Lower leg skin (tissue), 4 donors: ENCODE measurements at regions of chr6 and their contacts with region 1.

Region 1: GRCh38 chr6:5143634-5144311 is 58.6 kb downstream of the PPP1R3G start:
- DNase-seq: peak; percentile 85 to 96
- H3K4me3 ChIP-seq: no peak overlapping the region
- CTCF ChIP-seq: peak in 1 of 3 donors; percentile 55
- POLR2A ChIP-seq: no peak

Region 2: GRCh38 chr6:5305968-5306626 is 162.3 kb after region 1 on chr6:
- intact Hi-C with region 1: no loop called
- DNase-seq: no peak
- H3K4me3 ChIP-seq: no peak overlapping the region
- CTCF ChIP-seq: no peak
- POLR2A ChIP-seq: no peak

Region 3: GRCh38 chr6:5401845-5402738 is 258.3 kb after region 1 on chr6:
- intact Hi-C with region 1: loop called (anchors 10 kb)
- DNase-seq: no peak
- H3K4me3 ChIP-seq: no peak overlapping the region
- CTCF ChIP-seq: no peak
- POLR2A ChIP-seq: no peak

Region 4: DNA sequence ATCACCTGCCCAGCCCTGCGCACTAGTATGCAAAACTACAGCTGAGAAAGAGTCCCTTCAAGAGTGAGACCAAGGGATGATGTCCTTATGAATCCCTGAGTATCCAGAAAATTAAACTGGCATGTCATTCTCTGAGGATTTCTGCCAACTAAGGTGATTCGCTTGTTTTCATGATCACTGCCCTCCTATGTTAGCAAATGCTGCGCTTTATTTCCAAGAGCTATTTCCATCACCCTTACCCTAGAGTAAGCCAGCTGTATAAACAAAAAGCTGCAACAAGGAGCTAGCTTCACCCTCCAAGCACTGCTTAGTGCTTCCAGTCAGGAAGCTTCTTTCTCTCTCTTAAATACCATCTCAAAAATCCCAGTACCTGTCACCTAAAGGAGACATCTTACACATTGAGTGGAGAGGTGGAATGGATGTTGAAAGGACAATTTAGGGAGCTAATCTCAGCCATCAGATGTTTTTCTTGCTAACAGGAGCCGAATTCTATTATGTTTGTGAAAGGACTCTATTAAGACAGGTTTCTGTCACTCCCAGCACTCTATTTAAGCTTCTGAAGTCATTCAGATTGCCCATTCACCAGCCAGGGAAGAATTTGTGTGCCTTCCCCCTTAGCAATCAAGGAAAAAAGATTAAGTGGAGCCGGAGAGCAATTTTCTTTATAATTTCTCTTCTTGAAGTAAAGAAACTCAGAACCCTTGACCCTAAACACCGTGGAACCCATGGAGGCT is 540.7 kb after region 1 on chr6:
- intact Hi-C with region 1: no loop called
- DNase-seq: no peak
- H3K4me3 ChIP-seq: no peak overlapping the region
- CTCF ChIP-seq: no peak
- POLR2A ChIP-seq: no peak